ENCODE measurements at regions of chr17 and their contacts with region 1.

Region 1: DNA sequence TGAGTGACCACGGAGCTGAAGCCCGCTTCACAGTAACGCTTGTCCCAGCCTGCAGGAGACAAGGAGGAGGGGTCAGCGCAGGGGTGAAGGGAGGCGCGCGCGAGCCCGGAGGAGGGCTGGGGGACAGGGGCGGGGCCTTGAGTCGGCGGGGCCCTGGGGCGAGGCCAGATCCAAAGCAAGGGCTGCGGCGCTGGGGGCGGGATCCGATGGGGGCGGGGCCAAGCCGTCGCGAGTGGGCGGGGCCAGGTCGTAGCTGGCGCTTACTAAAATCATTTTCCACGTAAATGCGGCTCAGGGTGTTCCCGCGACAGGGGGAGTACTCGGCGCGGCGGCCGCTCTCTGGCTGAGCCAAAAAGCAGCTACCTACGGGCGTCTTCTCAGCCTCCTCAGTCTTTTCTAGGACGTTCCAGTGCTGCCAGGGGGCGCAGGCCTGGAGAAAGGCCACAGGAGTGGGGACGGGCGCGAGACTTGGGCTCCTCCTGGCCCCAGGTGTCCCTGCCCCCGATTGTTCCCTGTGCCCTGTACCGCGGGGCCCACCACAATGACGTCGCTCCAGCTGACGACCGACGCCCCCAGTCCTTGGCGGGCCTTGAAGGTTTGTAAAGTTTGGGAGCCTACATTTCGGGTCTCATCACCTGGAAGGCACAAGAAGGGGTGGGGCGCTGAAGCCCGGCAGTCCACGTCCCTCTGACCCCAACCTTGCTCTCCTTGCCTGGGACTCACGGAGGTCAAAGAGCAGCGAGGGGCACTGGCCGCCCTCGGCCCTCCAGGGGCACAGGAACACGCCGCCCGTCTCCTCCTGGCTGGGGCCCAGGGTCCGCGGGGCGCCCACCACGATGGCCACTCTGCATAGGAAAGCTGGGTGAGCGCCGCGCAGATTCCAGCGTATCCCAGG is 3.9 kb downstream of the ITGA2B start:
- DNase-seq: peak; percentile 77 to 85
- ATAC-seq: peak; percentile 80 to 94 (median 90)
- H3K4me3 ChIP-seq: peak overlapping the region; percentile 19 to 60 (median 52)
- H3K27ac ChIP-seq: peak overlapping the region in 2 of 10 donors; percentile 5 to 31
- H3K4me1 ChIP-seq: peaks cover 0 to 20% (median 13%) of the 10 kb centered on the region in 9 donors
- H3K27me3 ChIP-seq: peaks cover 0 to 31% (median 14%) of the 10 kb centered on the region in 7 donors
- CTCF ChIP-seq: peak in 4 of 9 donors; percentile 17 to 39 (median 26)

Region 2: GRCh38 chr17:44473367-44473766 is 87.8 kb after region 1 on chr17:
- intact Hi-C with region 1: loop called in 1 of 10 experiments (anchors 5 kb)
- DNase-seq: no peak
- ATAC-seq: no peak
- H3K4me3 ChIP-seq: no peak overlapping the region
- H3K27ac ChIP-seq: no peak overlapping the region
- H3K4me1 ChIP-seq: peaks cover 0 to 12% (median 0%) of the 10 kb centered on the region in 9 donors
- H3K27me3 ChIP-seq: no peaks in the 10 kb centered on the region
- CTCF ChIP-seq: no peak

Region 3: GRCh38 chr17:44503147-44504029 is 117.9 kb after region 1 on chr17 and contains the start of gene GPATCH8:
- intact Hi-C with region 1: loop called in 1 of 10 experiments (anchors 10 kb)
- DNase-seq: peak; percentile 95 to 97
- ATAC-seq: peak; percentile 98 to 99 (median 99)
- H3K4me3 ChIP-seq: peak within 1 kb of the TSS; percentile 60 to 97 (median 77)
- H3K27ac ChIP-seq: peak within 1 kb of the TSS; percentile 76 to 92 (median 90)
- H3K4me1 ChIP-seq: peaks cover 7 to 49% (median 43%) of the 10 kb centered on the region in 9 donors
- H3K27me3 ChIP-seq: peaks cover 0 to 14% (median 6%) of the 10 kb centered on the region in 7 donors
- CTCF ChIP-seq: no peak
- total RNA-seq, gene GPATCH8: 19.3 to 25.1 (median 22.0) TPM

Measured in heart right ventricle (tissue), 16 donors.